ENCODE measurements at regions of chr9 and their contacts with region 1.

Region 1: GRCh38 chr9:68507130-68507805 is 33.4 kb downstream of the TMEM252 start:
- DNase-seq: no peak
- ATAC-seq: peak in 6 of 8 donors; percentile 27 to 49 (median 34)
- H3K4me3 ChIP-seq: no peak overlapping the region
- H3K27ac ChIP-seq: peak overlapping the region in 8 of 10 donors; percentile 24 to 89 (median 65)
- H3K4me1 ChIP-seq: peaks cover 4 to 67% (median 35%) of the 10 kb centered on the region in 9 donors
- H3K27me3 ChIP-seq: no peaks in the 10 kb centered on the region
- CTCF ChIP-seq: peak; percentile 62 to 81 (median 74)

Region 2: GRCh38 chr9:68416936-68417564 is 90.2 kb before region 1 on chr9:
- intact Hi-C with region 1: loop called in 1 of 10 experiments (anchors 10 kb)
- DNase-seq: no peak
- ATAC-seq: no peak
- H3K4me3 ChIP-seq: no peak overlapping the region
- H3K27ac ChIP-seq: peak overlapping the region in 7 of 10 donors; percentile 43 to 90 (median 84)
- H3K4me1 ChIP-seq: peaks cover 0 to 64% (median 27%) of the 10 kb centered on the region in 9 donors
- H3K27me3 ChIP-seq: no peaks in the 10 kb centered on the region
- CTCF ChIP-seq: peak in 6 of 9 donors; percentile 9 to 40 (median 20)

Region 3: DNA sequence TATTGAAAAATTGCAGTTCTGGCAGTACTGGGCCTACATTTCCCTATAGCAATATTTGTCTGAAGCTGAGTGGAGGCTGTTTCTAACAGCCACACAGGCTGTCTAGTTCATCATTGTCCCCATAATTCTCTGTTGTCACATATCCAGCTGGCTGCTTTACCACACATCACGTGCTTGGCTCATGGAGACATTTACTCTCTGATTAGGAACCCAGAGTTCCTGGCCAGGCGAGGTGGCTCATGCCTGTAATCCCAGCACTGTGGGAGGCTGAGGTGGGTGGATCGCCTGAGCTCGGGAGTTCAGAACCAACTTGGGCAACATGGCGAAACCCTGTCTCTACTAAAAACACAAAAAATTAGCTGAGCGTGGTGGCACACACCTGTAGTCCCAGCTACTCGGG is 69.5 kb before region 1 on chr9:
- intact Hi-C with region 1: no loop called
- DNase-seq: peak; percentile 52 to 82
- ATAC-seq: peak; percentile 88 to 98 (median 96)
- H3K4me3 ChIP-seq: no peak overlapping the region
- H3K27ac ChIP-seq: peak overlapping the region in 6 of 10 donors; percentile 16 to 66 (median 53)
- H3K4me1 ChIP-seq: peaks cover 5 to 32% (median 23%) of the 10 kb centered on the region in 9 donors
- H3K27me3 ChIP-seq: no peaks in the 10 kb centered on the region
- CTCF ChIP-seq: no peak

Region 4: DNA sequence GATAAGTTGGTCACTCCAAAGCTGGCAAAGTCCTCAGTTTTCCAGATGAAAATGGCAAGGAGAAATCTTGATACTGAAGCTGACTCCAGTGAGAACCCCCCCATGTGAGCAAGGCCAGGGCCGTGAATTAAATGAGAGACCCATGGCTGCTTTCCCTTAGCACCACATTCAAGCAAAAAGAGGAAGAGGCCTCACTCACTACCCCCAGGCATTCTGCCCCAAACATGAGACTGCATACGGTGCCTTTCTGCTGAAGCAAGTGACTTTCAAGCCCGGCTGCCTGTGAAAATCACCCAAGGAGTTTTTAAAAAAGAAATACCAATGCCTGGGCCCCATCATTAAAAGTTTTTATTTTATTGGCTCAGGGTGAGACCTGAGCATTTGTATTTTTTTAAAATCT is 33.5 kb before region 1 on chr9:
- intact Hi-C with region 1: no loop called
- DNase-seq: no peak
- ATAC-seq: no peak
- H3K4me3 ChIP-seq: no peak overlapping the region
- H3K27ac ChIP-seq: peak overlapping the region in 1 of 10 donors; percentile 0
- H3K4me1 ChIP-seq: peaks cover 3 to 57% (median 28%) of the 10 kb centered on the region in 9 donors
- H3K27me3 ChIP-seq: no peaks in the 10 kb centered on the region
- CTCF ChIP-seq: no peak

Region 5: GRCh38 chr9:68552700-68553476 is 45.6 kb after region 1 on chr9:
- intact Hi-C with region 1: loop called in 2 of 10 experiments (anchors 5 kb)
- DNase-seq: no peak
- ATAC-seq: peak in 3 of 8 donors; percentile 28 to 53 (median 39)
- H3K4me3 ChIP-seq: no peak overlapping the region
- H3K27ac ChIP-seq: no peak overlapping the region
- H3K4me1 ChIP-seq: peaks cover 0 to 16% (median 0%) of the 10 kb centered on the region in 9 donors
- H3K27me3 ChIP-seq: no peaks in the 10 kb centered on the region
- CTCF ChIP-seq: no peak

Region 6: DNA sequence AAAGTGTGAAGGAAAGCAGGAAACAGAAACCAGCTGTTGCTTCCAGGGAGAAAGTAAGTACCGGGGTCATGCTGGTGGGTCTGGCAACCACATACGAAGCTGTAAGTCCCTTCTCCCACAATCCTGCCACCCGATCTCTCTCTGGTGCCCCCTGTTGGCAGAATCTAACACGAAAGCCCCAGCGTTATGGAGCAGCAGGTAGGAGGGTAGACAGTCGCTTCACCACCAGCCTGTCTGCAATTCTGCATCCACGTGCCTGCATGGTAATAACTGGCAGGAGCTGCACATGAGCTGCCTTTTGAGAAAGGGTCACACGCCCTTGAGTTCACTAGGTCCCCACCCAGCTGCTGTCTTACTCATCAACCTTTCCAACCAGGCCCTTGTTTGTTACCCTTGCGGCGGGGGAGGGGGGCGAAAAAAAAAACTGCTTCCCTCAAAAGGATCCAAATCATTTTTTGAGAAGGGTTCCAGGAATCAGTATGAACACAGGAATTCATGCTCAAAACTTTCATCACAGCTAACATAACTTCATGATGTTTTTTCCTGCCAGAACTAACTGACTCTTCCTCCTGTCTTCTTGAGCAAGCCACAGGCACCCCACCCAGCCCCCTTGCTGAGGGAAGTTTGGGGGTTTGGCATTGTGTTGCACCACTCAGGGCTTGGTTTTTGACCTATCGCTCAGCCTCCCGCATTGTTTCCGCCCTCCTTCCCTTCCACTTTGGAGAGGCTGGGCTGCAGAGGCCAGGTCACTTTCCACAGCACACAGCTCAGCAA is 53.0 kb after region 1 on chr9:
- intact Hi-C with region 1: loop called in 6 of 10 experiments (anchors 1 to 5 kb)
- DNase-seq: peak; percentile 39 to 42
- ATAC-seq: peak; percentile 35 to 77 (median 68)
- H3K4me3 ChIP-seq: no peak overlapping the region
- H3K27ac ChIP-seq: peak overlapping the region in 4 of 10 donors; percentile 25 to 69 (median 46)
- H3K4me1 ChIP-seq: peaks cover 0 to 36% (median 11%) of the 10 kb centered on the region in 9 donors
- H3K27me3 ChIP-seq: no peaks in the 10 kb centered on the region
- CTCF ChIP-seq: peak in 7 of 9 donors; percentile 42 to 63 (median 49)

Region 7: GRCh38 chr9:68567565-68567964 is 60.3 kb after region 1 on chr9:
- intact Hi-C with region 1: loop called in 3 of 10 experiments (anchors 5 kb)
- DNase-seq: no peak
- ATAC-seq: peak in 6 of 8 donors; percentile 35 to 65 (median 50)
- H3K4me3 ChIP-seq: no peak overlapping the region
- H3K27ac ChIP-seq: peak overlapping the region in 5 of 10 donors; percentile 27 to 61 (median 56)
- H3K4me1 ChIP-seq: peaks cover 0 to 15% (median 0%) of the 10 kb centered on the region in 9 donors
- H3K27me3 ChIP-seq: no peaks in the 10 kb centered on the region
- CTCF ChIP-seq: no peak

Region 8: DNA sequence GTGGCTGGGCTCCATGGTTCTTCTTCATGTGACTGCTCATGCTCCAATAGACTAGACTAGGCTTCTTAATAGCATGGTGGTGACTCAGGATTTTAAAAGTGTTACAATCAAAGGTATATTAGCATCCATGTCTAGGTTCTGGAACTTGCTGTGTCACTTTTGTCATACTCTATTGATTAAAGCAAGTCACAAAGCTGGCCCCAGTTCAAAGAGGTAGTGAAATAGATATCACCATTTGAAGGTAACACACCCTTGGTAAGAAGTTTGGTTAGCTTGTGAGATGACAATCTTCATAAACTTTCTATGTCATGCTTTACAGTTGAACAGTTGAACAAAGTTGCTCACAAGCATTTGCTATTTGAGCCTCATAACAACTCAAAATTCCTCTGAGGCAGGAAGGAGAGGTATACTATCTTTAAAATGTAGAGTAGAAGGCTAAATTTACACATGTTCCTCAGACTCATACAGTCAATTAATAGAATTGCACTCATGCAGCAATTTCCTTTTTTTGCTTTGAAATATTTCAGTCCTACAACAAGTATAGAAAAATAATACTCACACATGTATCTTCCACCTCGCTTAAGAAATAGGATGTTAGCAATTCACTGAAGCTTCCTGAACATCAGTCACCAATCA is 90.2 kb after region 1 on chr9:
- intact Hi-C with region 1: no loop called
- DNase-seq: no peak
- ATAC-seq: no peak
- H3K4me3 ChIP-seq: no peak overlapping the region
- H3K27ac ChIP-seq: no peak overlapping the region
- H3K4me1 ChIP-seq: no peaks in the 10 kb centered on the region
- H3K27me3 ChIP-seq: no peaks in the 10 kb centered on the region
- CTCF ChIP-seq: no peak

Region 9: GRCh38 chr9:68678430-68678829 is 171.2 kb after region 1 on chr9:
- intact Hi-C with region 1: no loop called
- DNase-seq: peak in 1 of 2 donors; percentile 5
- ATAC-seq: peak in 6 of 8 donors; percentile 61 to 87 (median 75)
- H3K4me3 ChIP-seq: no peak overlapping the region
- H3K27ac ChIP-seq: no peak overlapping the region
- H3K4me1 ChIP-seq: peaks cover 0 to 21% (median 0%) of the 10 kb centered on the region in 9 donors
- H3K27me3 ChIP-seq: peaks cover 0 to 17% (median 4%) of the 10 kb centered on the region in 7 donors
- CTCF ChIP-seq: peak; percentile 20 to 59 (median 35)

Measured in heart right ventricle (tissue), 16 donors.